ENCODE measurements at regions of chr12 and their contacts with region 1.

Region 1: GRCh38 chr12:18250313-18250916 is 10.9 kb upstream of the PIK3C2G start:
- DNase-seq: no peak
- H3K4me3 Mint-ChIP-seq: no peak overlapping the region
- H3K27ac Mint-ChIP-seq: no peak overlapping the region
- H3K4me1 Mint-ChIP-seq: no peaks in the 10 kb centered on the region
- H3K27me3 Mint-ChIP-seq: no peaks in the 10 kb centered on the region

Region 2: DNA sequence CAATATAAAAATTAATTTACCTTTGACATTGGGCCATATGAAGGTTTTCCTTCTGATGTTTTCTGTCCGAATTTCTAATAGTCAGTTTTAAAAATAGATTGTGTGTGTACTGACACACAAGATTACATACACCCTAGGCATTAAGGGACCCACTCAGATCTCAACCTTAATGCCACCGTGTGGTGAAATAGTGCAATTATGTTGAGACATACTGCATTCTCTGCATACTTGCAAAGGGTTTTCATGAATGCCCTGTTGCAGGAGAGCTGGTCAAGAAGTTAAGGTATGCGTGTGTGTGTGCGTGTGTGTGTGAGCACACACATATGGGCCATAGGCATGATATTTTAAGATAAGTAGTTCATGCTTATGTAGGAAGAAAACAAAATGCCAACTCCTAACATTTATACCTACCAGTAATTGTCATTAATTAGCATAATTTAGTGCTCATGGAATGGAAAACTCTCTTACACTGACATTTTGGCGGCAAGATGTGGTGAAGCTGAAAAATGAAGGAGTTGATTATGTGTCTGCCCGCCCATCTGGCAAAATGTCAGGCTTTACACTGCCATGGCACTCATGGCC is 69.7 kb after region 1 on chr12:
- CTCF ChIA-PET with region 1: interaction called, 10 read pairs
- POLR2A ChIA-PET with region 1: no interaction called
- intact Hi-C with region 1: no loop called
- DNase-seq: no peak
- H3K4me3 Mint-ChIP-seq: no peak overlapping the region
- H3K27ac Mint-ChIP-seq: no peak overlapping the region
- H3K4me1 Mint-ChIP-seq: no peaks in the 10 kb centered on the region
- H3K27me3 Mint-ChIP-seq: no peaks in the 10 kb centered on the region

Measured in activated CD4-positive, alpha-beta memory T cell treated with anti-CD3 and anti-CD28 coated beads for 36 hours (primary cell).